ENCODE measurements at regions of chr2 and their contacts with region 1.

Region 1: DNA sequence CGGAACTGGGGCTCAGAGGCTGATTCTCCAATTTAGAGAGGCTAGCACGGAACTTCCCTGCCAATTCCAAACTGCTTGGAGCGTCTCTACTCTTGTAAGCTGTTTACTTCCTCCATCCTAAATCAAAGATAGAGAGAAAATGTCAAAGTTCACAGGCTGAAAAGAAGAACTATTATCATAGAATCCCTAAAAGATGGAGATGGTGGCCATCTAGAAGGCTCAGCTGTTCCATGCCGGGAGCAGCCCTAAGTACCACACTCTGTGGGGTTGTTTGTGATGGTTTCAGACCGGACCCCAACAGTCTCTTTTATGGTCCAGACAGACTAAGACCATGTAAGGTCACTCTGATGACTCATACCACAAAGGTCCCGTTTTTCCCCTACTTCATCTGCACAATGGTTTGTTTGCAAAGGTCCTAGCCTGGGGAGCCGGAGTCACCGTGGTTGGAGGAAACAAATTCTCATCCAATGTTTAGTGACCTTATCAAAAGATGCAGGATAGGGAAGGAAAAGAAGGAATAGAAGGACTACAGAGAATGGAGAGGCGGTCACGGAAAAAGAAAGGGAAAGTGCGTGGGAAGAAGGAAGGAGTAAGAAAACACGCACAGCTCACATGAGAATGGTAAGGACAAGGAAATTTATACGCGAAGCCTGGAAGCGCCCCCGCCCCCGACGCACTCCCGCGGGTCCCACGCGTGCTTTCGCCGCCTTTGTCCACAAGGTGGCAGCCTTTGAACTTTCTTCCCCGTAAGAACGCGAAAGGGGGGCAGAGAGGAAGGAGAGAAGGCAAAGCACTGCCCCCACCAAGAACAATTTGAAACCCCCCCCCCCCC is 453 bp upstream of the ANTXR1 start:
- DNase-seq: peak; percentile 79 to 93
- ATAC-seq: peak; percentile 77
- H3K4me3 ChIP-seq: peak overlapping the region; percentile 69 to 83
- H3K27ac ChIP-seq: peak overlapping the region in 1 of 2 donors; percentile 1
- H3K4me1 ChIP-seq: no peaks in the 10 kb centered on the region
- H3K27me3 ChIP-seq: no peaks in the 10 kb centered on the region

Region 2: GRCh38 chr2:68943581-68944568 is 68.7 kb before region 1 on chr2:
- intact Hi-C with region 1: loop called in 1 of 2 experiments (anchors 2 kb)
- DNase-seq: peak in 1 of 2 donors; percentile 57
- ATAC-seq: peak; percentile 85
- H3K4me3 ChIP-seq: no peak overlapping the region
- H3K27ac ChIP-seq: no peak overlapping the region
- H3K4me1 ChIP-seq: no peaks in the 10 kb centered on the region
- H3K27me3 ChIP-seq: no peaks in the 10 kb centered on the region

Region 3: DNA sequence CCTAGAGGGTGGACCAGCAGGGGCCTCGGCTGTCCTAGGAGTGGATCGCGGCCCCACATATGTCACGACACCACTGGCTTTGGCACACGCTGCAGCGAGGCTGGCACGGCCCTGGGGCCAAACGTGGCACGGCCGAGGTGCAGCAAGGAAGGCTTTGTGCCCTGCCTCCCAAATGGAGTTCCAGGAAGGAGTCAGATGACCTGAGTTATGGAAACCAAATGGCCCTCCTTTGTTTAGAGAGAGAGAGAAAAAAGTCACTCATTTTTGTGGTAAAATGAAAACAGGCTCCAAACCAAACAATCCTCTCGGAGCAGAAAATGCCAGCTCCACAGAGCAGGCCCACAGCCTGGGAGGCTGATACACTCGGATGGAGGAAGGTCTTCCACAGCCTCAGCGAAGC is 106.1 kb after region 1 on chr2:
- intact Hi-C with region 1: loop called in 1 of 2 experiments (anchors 10 kb)
- DNase-seq: peak in 1 of 2 donors; percentile 64
- ATAC-seq: peak; percentile 60
- H3K4me3 ChIP-seq: no peak overlapping the region
- H3K27ac ChIP-seq: peak overlapping the region; percentile 23 to 87
- H3K4me1 ChIP-seq: peaks cover 7 to 9% of the 10 kb centered on the region in 2 donors
- H3K27me3 ChIP-seq: no peaks in the 10 kb centered on the region

Region 4: GRCh38 chr2:69149631-69150215 is 137.2 kb after region 1 on chr2:
- intact Hi-C with region 1: loop called in 1 of 2 experiments (anchors 10 kb)
- DNase-seq: peak; percentile 81 to 89
- ATAC-seq: peak; percentile 54
- H3K4me3 ChIP-seq: no peak overlapping the region
- H3K27ac ChIP-seq: peak overlapping the region in 1 of 2 donors; percentile 87
- H3K4me1 ChIP-seq: peaks cover 2 to 10% of the 10 kb centered on the region in 2 donors
- H3K27me3 ChIP-seq: no peaks in the 10 kb centered on the region

Region 5: DNA sequence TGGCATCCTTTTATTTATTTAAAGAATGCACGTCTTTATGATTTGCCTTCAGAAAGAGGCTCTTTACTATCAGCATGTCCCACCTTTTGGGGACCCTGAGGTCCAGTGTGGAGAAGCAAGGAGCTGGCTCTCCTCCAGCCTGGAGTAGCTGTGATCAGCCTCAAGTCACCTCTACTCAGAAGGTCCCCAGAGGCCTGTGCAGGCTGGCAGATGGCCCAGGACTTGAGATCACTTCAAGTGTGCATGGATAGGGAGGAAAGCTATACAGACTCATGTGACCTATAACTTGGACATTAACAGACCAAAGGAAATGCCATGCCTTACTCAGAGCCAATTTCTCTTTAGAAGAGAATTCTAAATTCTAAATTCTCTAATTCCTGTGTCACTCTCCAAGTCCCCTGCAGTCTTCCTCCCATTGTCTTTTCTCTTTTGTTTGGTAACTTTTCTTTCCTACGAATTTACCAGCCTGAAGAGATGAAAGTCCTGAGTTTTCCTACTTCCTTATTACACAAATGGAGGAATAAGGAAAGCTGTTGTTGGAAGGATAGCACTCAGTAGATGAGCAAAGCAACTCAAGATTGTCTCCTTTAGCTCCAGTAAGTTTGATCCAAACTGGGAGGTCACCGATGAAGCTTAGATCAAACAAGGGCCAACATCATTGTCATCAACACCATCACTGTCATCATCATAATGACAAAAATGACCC is 210.6 kb after region 1 on chr2:
- intact Hi-C with region 1: loop called in 1 of 2 experiments (anchors 5 kb)
- DNase-seq: peak; percentile 80 to 91
- ATAC-seq: no peak
- H3K4me3 ChIP-seq: no peak overlapping the region
- H3K27ac ChIP-seq: peak overlapping the region; percentile 49 to 51
- H3K4me1 ChIP-seq: peaks cover 8 to 11% of the 10 kb centered on the region in 2 donors
- H3K27me3 ChIP-seq: no peaks in the 10 kb centered on the region